PC-3 (cell line): ENCODE measurements at regions of chr12 and their contacts with region 1.

Region 1: DNA sequence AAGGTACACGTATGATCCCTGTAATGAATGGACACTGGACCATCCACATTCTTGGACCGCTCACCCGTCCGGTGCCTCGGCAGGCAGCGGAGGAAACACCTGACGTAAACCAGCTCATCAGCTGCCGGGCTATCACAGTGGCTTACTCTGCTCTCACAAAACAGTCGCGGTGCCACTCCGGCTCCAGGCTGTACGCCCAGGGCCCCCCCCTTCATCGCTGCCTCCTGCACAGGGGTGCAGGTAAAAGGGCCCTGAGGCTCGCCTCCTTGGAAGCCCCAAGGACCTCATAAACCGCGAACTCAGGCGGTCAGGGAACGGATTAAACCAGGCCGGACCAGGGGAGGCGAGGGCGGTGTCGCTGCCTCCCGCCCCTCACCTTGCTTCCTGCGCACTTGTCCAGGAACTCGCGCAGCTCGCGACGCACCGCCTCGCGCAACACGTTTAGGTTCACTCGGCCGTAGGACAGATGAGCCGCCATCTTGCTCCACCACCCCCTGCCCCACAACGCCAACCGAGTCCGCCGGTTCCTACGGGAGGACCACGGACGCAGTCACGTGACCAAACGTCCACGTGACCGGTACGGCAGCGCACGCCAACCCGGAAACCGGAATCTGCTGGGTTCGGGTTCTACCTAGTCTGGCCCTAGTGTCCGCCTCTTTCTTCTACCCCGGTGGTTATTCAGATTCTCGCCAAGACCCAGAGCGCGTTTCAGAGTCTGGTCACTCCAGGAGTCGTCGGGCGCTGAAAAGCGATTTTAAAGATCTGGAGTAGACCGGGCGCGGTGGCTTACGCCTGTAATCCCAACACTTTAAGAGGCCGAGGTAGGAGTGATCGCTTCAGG is at the start of gene VPS33A:
- DNase-seq: peak; percentile 99
- ATAC-seq: peak; percentile 87
- H3K4me3 ChIP-seq: peak within 1 kb of the TSS; percentile 84
- H3K27ac ChIP-seq: peak within 1 kb of the TSS; percentile 69
- H3K4me1 ChIP-seq: peaks cover 12% of the 10 kb centered on the region
- H3K27me3 ChIP-seq: no peaks in the 10 kb centered on the region
- CTCF ChIP-seq: no peak
- total RNA-seq, gene VPS33A: 22.2 and 40.8 TPM in 2 replicates

Region 2: DNA sequence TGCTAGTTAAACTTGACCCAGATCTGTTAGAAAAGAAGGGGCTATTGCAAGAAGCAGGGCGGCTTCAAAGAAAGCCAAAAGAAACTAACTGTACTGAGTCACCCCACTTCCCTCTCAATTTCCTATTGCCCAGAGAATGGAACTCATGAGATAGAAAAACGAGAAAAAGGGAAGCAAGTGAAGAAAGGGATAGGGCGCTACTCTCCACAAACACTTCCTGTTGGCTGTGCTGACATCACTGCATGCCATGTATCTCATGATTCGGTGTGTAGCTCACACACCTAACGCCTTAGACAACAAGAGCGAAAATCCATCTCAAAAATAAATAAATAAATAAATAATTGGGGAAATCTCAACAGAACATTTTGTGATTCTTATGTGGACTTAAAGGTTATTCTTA is 1069.2 kb before region 1 on chr12:
- CTCF ChIA-PET with region 1: no interaction called
- POLR2A ChIA-PET with region 1: no interaction called
- intact Hi-C with region 1: no loop called
- DNase-seq: no peak
- ATAC-seq: no peak
- H3K4me3 ChIP-seq: no peak overlapping the region
- H3K27ac ChIP-seq: no peak overlapping the region
- H3K4me1 ChIP-seq: peaks cover 3% of the 10 kb centered on the region; the same call in 1 of the 2 replicates
- H3K27me3 ChIP-seq: no peaks in the 10 kb centered on the region
- CTCF ChIP-seq: no peak

Region 3: DNA sequence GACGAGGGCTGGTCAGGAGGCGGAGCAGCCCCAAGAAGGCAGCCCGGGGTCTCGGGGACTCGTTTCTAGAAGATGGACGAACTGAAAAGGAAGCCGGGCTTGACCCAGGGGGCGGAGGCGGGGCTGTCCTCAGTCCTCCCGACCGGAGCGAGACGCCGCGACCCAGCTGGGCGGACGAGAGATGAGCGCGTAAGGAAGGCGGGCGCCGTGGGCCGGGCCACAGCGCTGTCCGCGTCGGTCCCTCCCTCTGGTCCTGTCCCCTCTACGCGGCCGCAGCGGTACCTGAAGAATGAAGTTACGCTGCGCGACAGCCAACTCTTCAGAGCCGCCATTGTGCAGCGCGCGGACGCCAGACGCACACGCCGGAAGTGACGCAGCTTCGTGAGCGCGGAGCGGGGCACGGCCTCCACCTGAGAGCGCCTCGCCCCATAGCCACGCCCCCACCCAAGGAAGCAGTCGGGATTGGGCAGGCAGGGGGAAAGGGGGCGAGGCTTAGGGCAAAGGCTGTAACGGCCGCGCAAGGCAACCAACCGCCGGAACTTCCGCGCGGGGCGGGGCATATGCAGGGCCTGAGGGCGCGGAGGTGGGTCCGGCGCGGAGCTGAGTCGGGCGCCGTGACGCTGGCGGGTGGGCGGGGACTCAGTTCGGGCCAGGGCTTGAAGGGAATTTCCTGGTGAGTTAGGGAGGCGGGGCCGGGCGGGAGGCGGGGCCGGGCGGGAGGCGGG is 40.3 kb before region 1 on chr12 and contains the start of gene DIABLO:
- CTCF ChIA-PET with region 1: interaction called, 3 read pairs
- POLR2A ChIA-PET with region 1: no interaction called
- intact Hi-C with region 1: loop called (anchors 5 kb)
- DNase-seq: peak; percentile 99
- ATAC-seq: peak; percentile 93
- H3K4me3 ChIP-seq: peak within 1 kb of the TSS; percentile 96
- H3K27ac ChIP-seq: peak within 1 kb of the TSS; percentile 82
- H3K4me1 ChIP-seq: peaks cover 18% of the 10 kb centered on the region
- H3K27me3 ChIP-seq: no peaks in the 10 kb centered on the region
- CTCF ChIP-seq: no peak
- total RNA-seq, gene DIABLO: 97.6 and 112 TPM in 2 replicates